ENCODE measurements at regions of chr9 and their contacts with region 1.

Region 1: GRCh38 chr9:21334701-21335632 is at the start of gene KLHL9:
- DNase-seq: peak; percentile 69 to 92 (median 79)
- ATAC-seq: peak; percentile 86 to 91 (median 88)
- H3K4me3 ChIP-seq: peak within 1 kb of the TSS; percentile 91 to 99
- H3K4me3 Mint-ChIP-seq: peak within 1 kb of the TSS; percentile 88 to 93 (median 89)
- H3K27ac ChIP-seq: peak within 1 kb of the TSS; percentile 98
- H3K27ac Mint-ChIP-seq: peak within 1 kb of the TSS; percentile 94
- H3K4me1 ChIP-seq: peaks cover 16 to 26% of the 10 kb centered on the region in 2 experiments
- H3K4me1 Mint-ChIP-seq: peaks cover 57 to 60% (median 57%) of the 10 kb centered on the region in 3 donors
- H3K27me3 ChIP-seq: no peaks in the 10 kb centered on the region
- H3K27me3 Mint-ChIP-seq: peaks cover 0 to 2% of the 10 kb centered on the region in 2 donors
- total RNA-seq, gene KLHL9: 14.1 to 27.7 (median 26.0) TPM

Region 2: GRCh38 chr9:21317956-21318923 is 16.7 kb before region 1 on chr9:
- CTCF ChIA-PET with region 1: interaction called, 3 to 9 read pairs
- POLR2A ChIA-PET with region 1: interaction called in 1 of 2 experiments, 10 read pairs
- DNase-seq: peak in 23 of 35 experiments; percentile 4 to 63 (median 16)
- ATAC-seq: peak; percentile 64 to 75 (median 68)
- H3K4me3 ChIP-seq: no peak overlapping the region
- H3K4me3 Mint-ChIP-seq: no peak overlapping the region
- H3K27ac ChIP-seq: no peak overlapping the region
- H3K27ac Mint-ChIP-seq: peak overlapping the region in 1 of 2 donors; percentile 29
- H3K4me1 ChIP-seq: no peaks in the 10 kb centered on the region
- H3K4me1 Mint-ChIP-seq: peaks cover 0 to 5% (median 2%) of the 10 kb centered on the region in 3 donors
- H3K27me3 ChIP-seq: no peaks in the 10 kb centered on the region
- H3K27me3 Mint-ChIP-seq: no peaks in the 10 kb centered on the region

Region 3: DNA sequence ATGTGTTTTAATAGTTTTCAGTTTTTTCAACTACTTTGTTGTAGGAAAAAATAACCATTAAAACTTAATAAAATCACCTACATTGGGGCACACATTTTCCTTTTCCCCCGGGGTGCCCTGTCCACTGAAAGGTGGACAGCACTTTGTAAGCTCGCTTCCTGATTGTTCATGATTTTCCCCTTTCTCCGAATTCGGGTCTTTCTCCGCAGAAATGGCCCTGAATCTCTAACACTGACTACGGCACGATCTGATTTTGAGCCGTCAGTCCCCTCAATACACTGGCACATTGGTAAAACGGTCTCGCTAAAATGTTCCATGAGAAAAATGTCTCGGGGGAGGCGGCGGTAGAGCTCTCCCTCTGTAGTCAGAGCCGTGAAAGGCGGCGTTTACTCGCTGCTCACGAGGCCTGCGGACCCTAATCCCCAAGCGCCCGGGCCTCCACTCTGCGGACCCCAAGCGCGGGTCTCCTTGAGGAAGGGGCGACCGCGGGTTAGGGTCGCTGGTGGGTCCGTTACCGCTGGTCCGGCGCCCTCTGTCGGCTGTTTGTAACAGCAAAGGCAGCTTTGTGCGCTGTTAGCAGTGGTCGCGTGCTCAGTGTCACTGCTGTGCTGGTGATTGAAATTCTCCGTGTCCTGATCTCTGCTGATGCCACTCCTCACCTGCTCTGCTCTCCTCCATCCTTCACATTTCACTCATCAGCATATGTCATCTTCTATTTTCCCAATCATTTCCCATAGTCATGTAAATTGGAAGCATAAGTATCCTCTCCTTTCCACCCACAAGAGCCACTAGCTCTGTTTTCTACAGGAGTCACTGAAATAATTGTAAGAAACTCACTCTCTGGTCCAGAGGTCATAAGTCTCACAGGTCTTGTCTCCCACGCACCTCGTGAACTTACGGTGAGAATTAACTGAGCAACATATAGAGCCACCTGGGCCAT is 61.1 kb after region 1 on chr9:
- CTCF ChIA-PET with region 1: interaction called, 3 to 26 read pairs
- POLR2A ChIA-PET with region 1: interaction called in 1 of 2 experiments, 4 read pairs
- DNase-seq: peak in 32 of 35 experiments; percentile 22 to 74 (median 46)
- ATAC-seq: peak; percentile 80 to 85 (median 83)
- H3K4me3 ChIP-seq: peak overlapping the region; percentile 37 to 84
- H3K4me3 Mint-ChIP-seq: peak overlapping the region; percentile 62 to 77 (median 71)
- H3K27ac ChIP-seq: no peak overlapping the region
- H3K27ac Mint-ChIP-seq: no peak overlapping the region
- H3K4me1 ChIP-seq: peaks cover 0 to 8% of the 10 kb centered on the region in 2 experiments
- H3K4me1 Mint-ChIP-seq: peaks cover 5 to 11% (median 6%) of the 10 kb centered on the region in 3 donors
- H3K27me3 ChIP-seq: peaks cover 2 to 21% of the 10 kb centered on the region in 2 experiments
- H3K27me3 Mint-ChIP-seq: peaks cover 46 to 69% of the 10 kb centered on the region in 2 donors

Region 4: DNA sequence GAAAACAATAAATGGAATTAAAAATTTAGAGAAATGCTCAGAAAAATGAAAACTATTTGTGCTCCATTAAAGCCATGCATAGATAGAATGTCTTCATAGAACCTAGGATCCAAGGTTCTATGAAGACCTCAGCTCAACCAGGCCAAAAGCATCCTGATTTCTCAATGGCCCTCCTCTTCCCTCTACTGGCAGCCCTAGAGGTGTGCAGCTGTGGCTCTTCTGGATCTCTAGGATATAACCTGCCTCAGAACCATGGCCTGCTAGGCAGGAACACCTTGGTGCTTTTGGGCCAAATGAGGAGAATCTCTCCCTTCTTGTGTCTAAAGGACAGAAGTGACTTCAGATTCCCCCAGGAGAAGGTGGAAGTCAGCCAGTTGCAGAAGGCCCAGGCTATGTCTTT is 120.4 kb after region 1 on chr9:
- CTCF ChIA-PET with region 1: interaction called in 1 of 2 experiments, 10 read pairs
- POLR2A ChIA-PET with region 1: no interaction called
- DNase-seq: peak in 19 of 35 experiments; percentile 2 to 62 (median 10)
- ATAC-seq: peak; percentile 63 to 87 (median 70)
- H3K4me3 ChIP-seq: no peak overlapping the region
- H3K4me3 Mint-ChIP-seq: no peak overlapping the region
- H3K27ac ChIP-seq: no peak overlapping the region
- H3K27ac Mint-ChIP-seq: no peak overlapping the region
- H3K4me1 ChIP-seq: no peaks in the 10 kb centered on the region
- H3K4me1 Mint-ChIP-seq: peaks cover 0 to 2% (median 0%) of the 10 kb centered on the region in 3 donors
- H3K27me3 ChIP-seq: no peaks in the 10 kb centered on the region
- H3K27me3 Mint-ChIP-seq: peaks cover 7 to 32% of the 10 kb centered on the region in 2 donors